Esophagus muscularis mucosa (tissue), 4 donors: ENCODE measurements at regions of chr22 and their contacts with region 1.

Region 1: GRCh38 chr22:20965104-20965887 is 1.8 kb upstream of the AIFM3 start:
- DNase-seq: no peak
- H3K4me3 ChIP-seq: peak overlapping the region; percentile 51 to 63 (median 56)
- H3K27ac ChIP-seq: no peak overlapping the region
- H3K4me1 ChIP-seq: peaks cover 8 to 28% (median 21%) of the 10 kb centered on the region in 4 donors
- H3K27me3 ChIP-seq: peaks cover 0 to 18% (median 4%) of the 10 kb centered on the region in 4 donors
- CTCF ChIP-seq: no peak
- EP300 ChIP-seq: no peak
- POLR2A ChIP-seq: no peak

Region 2: GRCh38 chr22:20885557-20886323 is 79.6 kb before region 1 on chr22:
- intact Hi-C with region 1: loop called (anchors 10 kb)
- DNase-seq: peak; percentile 93
- H3K4me3 ChIP-seq: no peak overlapping the region
- H3K27ac ChIP-seq: peak overlapping the region; percentile 48 to 74 (median 68)
- H3K4me1 ChIP-seq: peaks cover 6 to 12% (median 8%) of the 10 kb centered on the region in 4 donors
- H3K27me3 ChIP-seq: no peaks in the 10 kb centered on the region
- CTCF ChIP-seq: peak; percentile 84 to 89 (median 85)
- EP300 ChIP-seq: no peak
- POLR2A ChIP-seq: no peak

Region 3: DNA sequence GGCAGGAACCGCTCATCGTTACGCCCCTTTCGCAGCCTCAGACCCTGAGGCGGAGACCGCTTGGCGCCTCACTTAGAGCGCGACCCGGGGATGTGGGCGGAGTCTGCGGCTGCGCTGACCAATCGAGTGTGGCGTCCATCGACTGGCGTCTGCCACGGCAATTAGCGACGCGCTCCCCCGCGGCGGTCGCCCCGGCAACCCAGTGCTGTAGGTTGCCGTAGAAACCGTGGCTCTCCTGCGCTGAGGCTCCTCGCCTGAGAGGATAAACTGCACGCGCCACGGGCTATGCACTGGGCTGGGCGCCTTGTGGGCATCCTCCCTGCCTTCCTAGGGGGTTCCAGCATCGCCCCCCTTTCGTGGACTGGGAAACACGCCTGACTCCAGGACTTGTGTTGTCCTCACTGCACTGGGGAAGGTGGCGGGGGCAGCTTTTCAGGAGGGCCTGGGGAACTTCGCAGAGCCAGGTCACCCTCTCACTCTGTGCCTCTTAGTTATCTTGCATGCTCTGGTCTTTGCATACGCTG is 49.0 kb after region 1 on chr22:
- intact Hi-C with region 1: loop called (anchors 10 kb)
- DNase-seq: peak; percentile 94
- H3K4me3 ChIP-seq: peak overlapping the region; percentile 53 to 66 (median 59)
- H3K27ac ChIP-seq: peak overlapping the region; percentile 71 to 86 (median 80)
- H3K4me1 ChIP-seq: peaks cover 22 to 27% (median 25%) of the 10 kb centered on the region in 4 donors
- H3K27me3 ChIP-seq: no peaks in the 10 kb centered on the region
- CTCF ChIP-seq: no peak
- EP300 ChIP-seq: no peak
- POLR2A ChIP-seq: no peak

Region 4: DNA sequence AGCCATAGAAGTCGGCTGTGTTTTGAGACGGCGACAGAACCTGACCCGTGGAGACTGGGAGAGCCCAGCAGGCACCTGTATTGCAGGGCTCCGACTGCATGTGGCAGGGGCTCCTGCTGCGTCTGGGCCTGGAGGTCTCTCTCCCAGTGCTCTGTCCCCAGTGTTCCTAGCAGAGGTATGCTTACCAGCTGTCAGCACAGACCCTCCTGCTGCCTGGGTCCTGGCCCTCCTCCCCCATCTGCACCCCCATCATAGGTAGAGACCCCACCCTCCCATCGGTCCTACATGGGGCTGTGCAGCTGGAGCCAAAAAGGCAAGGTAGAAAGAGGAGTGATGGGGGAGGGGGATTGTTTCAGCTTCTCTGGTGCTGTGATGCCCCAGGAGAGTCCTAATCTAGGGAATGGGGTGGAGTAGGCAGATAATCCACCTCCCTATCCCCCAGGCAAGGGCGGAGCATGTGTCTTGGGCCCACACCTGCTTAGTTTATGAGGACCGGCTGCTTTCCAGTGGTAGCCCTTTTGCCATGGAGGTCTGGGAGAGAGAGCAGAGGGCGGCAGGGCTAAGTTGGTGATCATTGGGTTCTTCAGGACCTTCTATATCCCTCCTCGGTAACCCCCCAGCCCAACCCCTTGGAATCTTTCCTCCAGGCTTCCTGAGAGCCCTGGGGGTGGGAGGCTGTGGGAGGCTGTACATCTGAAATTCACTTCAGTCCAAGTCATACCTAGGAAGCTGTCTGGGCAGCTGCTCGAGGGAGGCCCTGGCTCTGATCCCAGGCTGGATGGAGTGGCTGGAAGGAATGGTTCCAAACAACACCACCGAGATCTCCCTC is 61.7 kb after region 1 on chr22:
- intact Hi-C with region 1: no loop called
- DNase-seq: no peak
- H3K4me3 ChIP-seq: no peak overlapping the region
- H3K27ac ChIP-seq: no peak overlapping the region
- H3K4me1 ChIP-seq: peaks cover 4 to 13% (median 9%) of the 10 kb centered on the region in 4 donors
- H3K27me3 ChIP-seq: peaks cover 0 to 41% (median 0%) of the 10 kb centered on the region in 4 donors
- CTCF ChIP-seq: no peak
- EP300 ChIP-seq: no peak
- POLR2A ChIP-seq: no peak